ENCODE measurements at regions of chr16 and their contacts with region 1.

Region 1: DNA sequence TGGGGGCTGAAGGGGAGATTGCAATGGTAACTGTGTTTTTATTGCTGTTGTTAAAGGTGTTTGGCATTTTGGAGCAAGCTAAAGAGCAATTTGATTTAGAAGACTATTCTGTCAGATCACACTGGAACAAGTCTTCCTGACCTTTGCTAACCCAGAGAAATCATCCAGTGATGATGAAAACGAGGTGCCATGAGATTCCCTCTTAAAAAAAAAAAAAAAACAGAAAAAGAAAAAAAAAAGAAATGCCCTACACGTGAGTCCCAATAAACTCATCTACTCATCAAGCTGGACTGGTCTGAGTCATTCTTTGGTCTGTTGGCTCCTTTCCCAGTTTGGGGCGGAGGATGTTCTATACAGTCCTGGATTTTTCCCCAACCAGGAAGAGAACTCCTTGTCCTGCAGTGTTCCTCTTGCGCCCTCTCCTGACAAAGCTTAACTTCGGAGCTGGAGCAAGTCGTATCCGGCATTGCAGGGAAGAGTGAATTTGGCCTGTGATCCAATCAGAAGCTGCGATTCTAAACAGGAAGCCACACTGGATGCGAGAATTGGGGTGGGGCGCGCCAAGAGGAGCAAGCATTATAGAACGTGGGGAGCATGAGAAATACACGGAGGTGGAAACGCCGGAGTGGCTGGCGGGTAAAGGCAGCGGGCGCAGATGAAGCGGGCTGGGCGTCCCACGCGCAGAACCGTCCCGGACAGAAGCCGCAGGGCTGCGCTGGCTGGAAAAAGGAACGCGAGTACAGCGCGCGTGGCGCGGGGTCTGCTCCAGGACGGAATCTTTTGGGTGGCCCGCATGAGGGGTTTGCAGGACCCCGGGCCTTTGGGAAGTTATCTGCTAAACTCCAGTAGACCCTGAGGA is 22.4 kb upstream of the CRYM start:
- DNase-seq: peak; percentile 84
- CTCF ChIP-seq: peak; percentile 69

Region 2: GRCh38 chr16:21134053-21134452 is 166.5 kb before region 1 on chr16:
- in situ Hi-C with region 1: no loop called
- DNase-seq: no peak
- CTCF ChIP-seq: no peak

Region 3: DNA sequence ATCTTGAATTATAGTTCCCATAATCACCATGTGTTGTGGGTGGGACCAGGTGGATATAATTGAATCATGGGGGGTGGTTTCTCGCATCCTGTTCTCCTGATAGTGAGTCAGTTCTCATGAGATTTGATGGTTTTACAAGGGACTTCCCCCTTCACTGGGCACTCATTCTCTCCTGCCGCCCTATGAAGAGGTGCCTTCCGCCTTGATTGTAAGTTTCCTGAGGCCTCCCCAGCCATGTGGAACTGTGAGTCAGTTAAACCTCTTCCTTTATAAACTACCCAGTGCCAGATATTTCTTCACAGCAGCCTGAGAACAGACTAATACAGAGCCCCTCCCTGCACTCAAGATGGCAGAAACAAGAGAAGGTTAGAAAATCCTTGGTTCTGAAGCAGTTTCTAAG is 115.7 kb before region 1 on chr16:
- in situ Hi-C with region 1: loop called (anchors 10 kb)
- DNase-seq: no peak
- CTCF ChIP-seq: no peak

Region 4: DNA sequence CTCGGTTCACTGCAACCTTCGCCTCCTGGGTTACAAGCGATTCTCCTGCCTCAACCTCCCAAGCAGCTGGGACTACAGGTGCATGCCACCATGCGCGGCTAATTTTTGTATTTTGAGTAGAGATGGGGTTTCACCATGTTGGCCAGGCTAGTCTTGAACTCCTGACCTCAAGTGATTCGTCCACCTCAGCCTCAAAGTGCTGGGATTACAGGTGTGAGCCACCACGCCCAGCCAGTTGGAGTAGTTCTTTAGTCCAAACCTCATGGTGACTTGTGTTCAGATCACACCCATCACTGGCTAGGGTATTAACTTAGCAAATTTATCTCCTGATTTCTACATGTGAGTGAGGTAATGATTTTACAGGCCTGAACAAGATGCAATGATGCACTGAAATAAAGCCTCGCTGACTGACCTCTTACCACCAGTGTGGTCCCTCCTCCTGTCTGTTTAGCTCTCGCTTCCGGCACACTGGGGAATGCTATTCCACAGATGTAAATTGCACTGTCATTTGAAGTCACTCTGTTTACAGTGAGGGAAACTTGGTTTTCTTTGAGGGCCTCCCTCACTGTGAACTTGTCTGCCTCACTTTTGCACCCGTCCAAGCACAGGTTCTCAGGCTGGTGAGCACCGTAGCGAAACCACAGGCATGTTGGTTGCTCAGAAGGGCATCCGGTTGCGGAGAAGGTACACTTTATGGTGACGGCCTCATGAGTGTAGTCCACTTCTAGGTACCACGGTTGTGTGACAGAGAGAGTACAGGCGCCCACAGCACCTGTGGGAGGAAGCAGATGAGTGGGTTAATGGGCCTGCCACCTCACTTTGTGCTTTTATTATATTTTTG is 346.4 kb after region 1 on chr16:
- in situ Hi-C with region 1: no loop called
- DNase-seq: peak; percentile 59
- CTCF ChIP-seq: no peak

Region 5: GRCh38 chr16:22321339-22322001 is 1020.9 kb after region 1 on chr16:
- in situ Hi-C with region 1: loop called (anchors 10 kb)
- DNase-seq: peak; percentile 86
- CTCF ChIP-seq: peak; percentile 60

Measured in GM13976 (cell line).